Activated CD4-positive, alpha-beta T cell treated with anti-CD3 and anti-CD28 coated beads, Interleukin-2, amount 10 ng/mL, durations not matched to agents 24 days and 14 days (primary cell): ENCODE measurements at regions of chr1 and their contacts with region 1.

Region 1: GRCh38 chr1:205121660-205122488 is at the start of gene RBBP5:
- DNase-seq: peak; percentile 98
- H3K4me3 Mint-ChIP-seq: peak within 1 kb of the TSS; percentile 98
- H3K27ac Mint-ChIP-seq: peak within 1 kb of the TSS; percentile 98
- H3K4me1 Mint-ChIP-seq: peaks cover 34% of the 10 kb centered on the region
- H3K27me3 Mint-ChIP-seq: no peaks in the 10 kb centered on the region
- total RNA-seq, gene RBBP5: 24.0 and 27.2 TPM in 2 replicates

Region 2: GRCh38 chr1:205061665-205062069 is 60.2 kb before region 1 on chr1:
- intact Hi-C with region 1: no loop called
- DNase-seq: peak; percentile 92
- H3K4me3 Mint-ChIP-seq: no peak overlapping the region
- H3K27ac Mint-ChIP-seq: no peak overlapping the region
- H3K4me1 Mint-ChIP-seq: no peaks in the 10 kb centered on the region
- H3K27me3 Mint-ChIP-seq: peaks cover 1% of the 10 kb centered on the region

Region 3: DNA sequence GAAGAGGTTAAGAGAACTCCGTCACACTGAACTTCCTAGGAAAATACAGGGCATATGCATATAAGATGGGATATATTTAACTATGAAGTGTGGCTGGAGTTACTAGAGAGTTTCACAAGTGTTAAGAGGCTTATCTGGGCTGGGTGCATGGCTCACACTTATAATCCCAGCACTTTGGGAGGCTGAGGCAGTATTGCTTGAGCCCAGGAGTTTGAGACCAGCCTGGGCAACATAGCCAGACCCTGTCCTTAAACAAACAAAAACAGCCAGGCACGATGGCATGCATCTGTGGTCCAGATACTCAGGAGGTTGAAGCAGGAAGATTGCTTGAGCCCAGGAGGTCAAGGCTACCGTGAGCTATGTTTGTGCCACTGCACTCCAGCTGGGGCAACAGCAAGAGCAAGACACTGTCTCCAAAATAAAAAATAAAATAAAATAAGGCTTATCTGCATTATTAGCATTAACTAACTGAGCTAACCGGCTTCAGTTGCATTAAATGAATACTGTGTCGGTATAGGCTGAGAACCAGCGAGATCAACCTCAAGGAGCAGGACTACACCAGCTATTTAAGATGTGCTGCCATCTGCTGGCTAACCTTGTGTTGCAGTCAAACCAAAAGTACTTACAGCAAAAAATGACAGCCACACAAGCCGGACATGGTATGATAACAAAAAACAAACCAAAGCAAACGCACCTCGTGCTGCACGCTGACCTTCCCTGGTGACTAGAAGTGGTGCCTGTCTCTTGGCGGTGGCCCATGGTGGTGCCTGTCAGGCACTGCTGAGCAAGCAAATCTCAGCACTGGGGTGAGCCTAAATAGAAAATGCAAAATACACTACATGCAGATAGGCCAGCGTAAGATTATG is 19.6 kb after region 1 on chr1:
- intact Hi-C with region 1: loop called (anchors 1 kb)
- DNase-seq: peak; percentile 92
- H3K4me3 Mint-ChIP-seq: no peak overlapping the region
- H3K27ac Mint-ChIP-seq: no peak overlapping the region
- H3K4me1 Mint-ChIP-seq: peaks cover 6% of the 10 kb centered on the region
- H3K27me3 Mint-ChIP-seq: no peaks in the 10 kb centered on the region

Region 4: GRCh38 chr1:205255941-205256780 is 134.3 kb after region 1 on chr1:
- intact Hi-C with region 1: loop called (anchors 1 kb)
- DNase-seq: peak; percentile 96
- H3K4me3 Mint-ChIP-seq: no peak overlapping the region
- H3K27ac Mint-ChIP-seq: no peak overlapping the region
- H3K4me1 Mint-ChIP-seq: peaks cover 5% of the 10 kb centered on the region
- H3K27me3 Mint-ChIP-seq: no peaks in the 10 kb centered on the region